Heart left ventricle (tissue), 16 donors: ENCODE measurements at regions of chr1 and their contacts with region 1.

Region 1: DNA sequence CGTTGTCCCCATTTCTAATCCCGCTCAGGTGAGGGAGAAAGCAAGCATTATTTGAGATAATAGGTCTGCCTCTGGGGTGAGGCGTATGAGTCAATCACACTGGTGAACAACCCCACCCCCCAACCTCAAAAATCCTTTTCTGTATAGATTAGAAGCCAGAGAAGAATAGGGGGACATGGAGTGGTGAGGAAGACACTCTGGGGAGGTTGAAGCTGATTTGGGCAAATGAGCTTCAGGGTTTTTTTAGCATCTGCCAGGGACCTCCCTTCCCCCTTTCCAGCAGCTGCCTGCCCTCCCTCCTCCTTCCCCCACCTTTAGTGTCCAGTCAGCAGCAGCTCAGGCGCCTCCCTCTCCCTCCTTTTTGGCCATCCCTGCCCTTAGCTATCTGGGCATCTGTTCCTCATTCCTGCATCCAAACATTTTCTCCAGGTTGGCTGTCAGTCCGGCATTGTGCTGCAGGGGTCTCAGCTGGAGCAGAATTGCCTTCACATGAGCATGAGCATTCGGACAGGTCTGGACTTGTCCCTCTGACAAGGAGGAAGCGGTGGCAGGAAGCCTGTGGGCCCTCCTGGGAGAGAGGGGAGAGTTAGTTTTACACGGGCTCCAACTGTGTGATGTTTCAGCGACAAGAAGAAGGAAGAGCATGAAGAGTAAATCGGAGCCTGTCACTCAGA is 30.8 kb upstream of the PTGFRN start:
- DNase-seq: peak; percentile 38 to 64 (median 45)
- ATAC-seq: peak in 3 of 4 donors; percentile 25 to 45 (median 40)
- H3K4me3 ChIP-seq: peak overlapping the region in 10 of 12 donors; percentile 28 to 54 (median 44)
- H3K27ac ChIP-seq: peak overlapping the region; percentile 20 to 79 (median 67)
- H3K4me1 ChIP-seq: peaks cover 0 to 43% (median 24%) of the 10 kb centered on the region in 12 donors
- H3K27me3 ChIP-seq: no peaks in the 10 kb centered on the region
- CTCF ChIP-seq: no peak
- POLR2A ChIP-seq: no peak

Region 2: GRCh38 chr1:117026361-117026760 is 147.4 kb after region 1 on chr1:
- intact Hi-C with region 1: loop called in 1 of 10 experiments (anchors 10 kb)
- DNase-seq: no peak
- ATAC-seq: peak in 1 of 4 donors; percentile 34
- H3K4me3 ChIP-seq: no peak overlapping the region
- H3K27ac ChIP-seq: no peak overlapping the region
- H3K4me1 ChIP-seq: peaks cover 0 to 9% (median 3%) of the 10 kb centered on the region in 12 donors
- H3K27me3 ChIP-seq: no peaks in the 10 kb centered on the region
- CTCF ChIP-seq: no peak
- POLR2A ChIP-seq: no peak